IMR-90 (cell line): ENCODE measurements at regions of chr11 and their contacts with region 1.

Region 1: DNA sequence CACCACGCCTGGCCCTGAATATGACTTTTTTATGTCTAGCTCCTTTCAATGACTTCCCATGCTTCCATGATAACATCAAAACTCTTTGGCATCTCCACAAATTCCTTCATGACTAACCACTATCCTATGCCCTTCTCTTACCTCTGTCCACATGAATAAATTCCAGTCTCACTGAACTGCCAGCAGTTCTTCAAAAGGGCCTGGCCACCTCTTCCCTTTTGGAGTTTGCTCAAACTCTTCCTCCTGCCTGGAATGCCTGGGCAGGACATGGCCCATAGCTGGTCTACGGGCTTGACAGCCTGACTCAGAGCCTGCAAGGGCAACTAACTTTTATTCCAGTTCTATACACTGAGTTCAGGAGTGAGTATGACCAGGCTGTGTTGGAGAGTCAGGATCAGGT is 41.8 kb upstream of the ZBTB16 start:
- DNase-seq: no peak
- ATAC-seq: no peak
- H3K4me3 ChIP-seq: no peak overlapping the region
- H3K27ac ChIP-seq: no peak overlapping the region
- H3K4me1 ChIP-seq: no peaks in the 10 kb centered on the region
- H3K27me3 ChIP-seq: no peaks in the 10 kb centered on the region
- CTCF ChIP-seq: no peak
- POLR2A ChIP-seq: no peak
- RAD21 ChIP-seq: no peak

Region 2: GRCh38 chr11:114586797-114587196 is 569.1 kb after region 1 on chr11:
- CTCF ChIA-PET with region 1: no interaction called
- POLR2A ChIA-PET with region 1: no interaction called
- dilution Hi-C with region 1: no loop called
- in situ Hi-C with region 1: loop called (anchors 25 kb)
- intact Hi-C with region 1: no loop called
- DNase-seq: peak; percentile 10
- ATAC-seq: no peak
- H3K4me3 ChIP-seq: no peak overlapping the region
- H3K27ac ChIP-seq: no peak overlapping the region
- H3K4me1 ChIP-seq: no peaks in the 10 kb centered on the region
- H3K27me3 ChIP-seq: no peaks in the 10 kb centered on the region
- CTCF ChIP-seq: peak; percentile 47
- POLR2A ChIP-seq: no peak
- RAD21 ChIP-seq: peak; percentile 57